Adrenal gland (tissue), 19 donors: ENCODE measurements at regions of chrX and their contacts with region 1.

Region 1: GRCh38 chrX:40013266-40014195 is 84.2 kb downstream of the BCOR start:
- DNase-seq: peak; percentile 58 to 73 (median 65)
- H3K4me3 ChIP-seq: peak overlapping the region in 2 of 4 donors; percentile 37 to 63
- H3K27ac ChIP-seq: peak overlapping the region; percentile 64 to 94 (median 84)
- H3K4me1 ChIP-seq: peaks cover 0 to 13% of the 10 kb centered on the region in 2 donors
- H3K27me3 ChIP-seq: peaks cover 38% of the 10 kb centered on the region
- CTCF ChIP-seq: no peak
- POLR2A ChIP-seq: peak in 1 of 2 donors; percentile 1

Region 2: GRCh38 chrX:40058719-40059118 is 45.2 kb after region 1 on chrX:
- intact Hi-C with region 1: no loop called
- DNase-seq: peak in 1 of 7 donors; percentile 80
- H3K4me3 ChIP-seq: no peak overlapping the region
- H3K27ac ChIP-seq: no peak overlapping the region
- H3K4me1 ChIP-seq: no peaks in the 10 kb centered on the region
- H3K27me3 ChIP-seq: no peaks in the 10 kb centered on the region
- CTCF ChIP-seq: no peak
- POLR2A ChIP-seq: no peak

Region 3: GRCh38 chrX:40097497-40098263 is 84.1 kb after region 1 on chrX and contains the start of gene BCOR:
- intact Hi-C with region 1: loop called in 1 of 2 experiments (anchors 10 kb)
- DNase-seq: peak; percentile 74 to 88 (median 76)
- H3K4me3 ChIP-seq: peak within 1 kb of the TSS in 2 of 4 donors; percentile 57 to 72
- H3K27ac ChIP-seq: peak within 1 kb of the TSS in 4 of 5 donors; percentile 64 to 88 (median 82)
- H3K4me1 ChIP-seq: peaks cover 8 to 11% of the 10 kb centered on the region in 2 donors
- H3K27me3 ChIP-seq: peaks cover 27% of the 10 kb centered on the region
- CTCF ChIP-seq: peak in 1 of 6 experiments; percentile 6
- POLR2A ChIP-seq: peak; percentile 84
- total RNA-seq, gene BCOR: 16.7 to 42.9 (median 30.4) TPM